ENCODE measurements at regions of chr2 and their contacts with region 1.

Region 1: DNA sequence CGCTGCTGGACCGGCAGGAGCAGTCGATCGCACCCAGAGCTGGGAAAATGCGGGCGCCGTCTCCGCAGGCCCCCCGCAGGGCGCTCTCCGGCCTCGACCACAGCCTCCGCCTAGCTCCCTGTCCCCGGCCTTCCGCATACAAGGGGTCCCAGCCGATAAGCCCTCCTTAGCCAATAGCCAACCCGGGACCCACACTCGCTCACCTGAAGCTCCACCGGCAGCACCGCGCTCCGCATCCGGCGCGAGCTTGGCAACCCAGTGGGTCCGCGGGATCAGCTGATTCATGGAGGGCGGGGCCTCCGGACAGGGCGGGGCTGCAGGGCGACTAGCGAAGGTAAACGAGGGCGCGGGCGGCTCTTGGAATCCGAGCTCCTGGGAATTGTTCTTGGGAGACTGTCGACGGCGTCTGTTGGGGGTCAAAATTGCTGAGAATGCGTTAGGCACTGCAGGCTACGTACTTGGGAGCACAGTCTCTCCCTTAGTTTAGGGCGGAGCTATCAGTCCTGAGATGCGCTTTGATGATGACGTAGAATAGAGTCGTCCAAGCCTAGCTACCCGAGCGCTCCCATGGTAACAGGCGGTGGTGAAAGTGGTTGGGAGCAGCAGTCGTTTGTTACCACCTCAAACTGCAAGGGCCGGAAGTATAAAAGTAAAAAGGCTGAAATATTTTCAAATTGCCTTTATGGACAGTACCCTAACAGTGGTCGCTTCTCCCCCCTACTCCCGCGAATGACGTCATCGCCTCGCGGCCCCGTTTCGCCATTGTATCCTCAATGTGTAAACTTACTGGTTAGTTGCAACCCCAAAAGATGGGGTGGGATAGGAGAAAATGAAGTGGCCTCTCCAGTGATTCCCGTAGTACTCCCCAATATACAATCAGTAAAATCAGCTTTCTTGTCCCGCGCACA is at the start of gene ALS2:
- DNase-seq: peak; percentile 90
- H3K4me3 Mint-ChIP-seq: peak within 1 kb of the TSS; percentile 97
- H3K27ac Mint-ChIP-seq: peak within 1 kb of the TSS; percentile 95
- H3K4me1 Mint-ChIP-seq: peaks cover 19% of the 10 kb centered on the region
- H3K27me3 Mint-ChIP-seq: peaks cover 11% of the 10 kb centered on the region
- total RNA-seq, gene ALS2: 11.3 and 14.3 TPM in 2 replicates

Region 2: GRCh38 chr2:201642579-201643215 is 138.2 kb before region 1 on chr2:
- intact Hi-C with region 1: loop called (anchors 2 kb)
- DNase-seq: peak; percentile 85
- H3K4me3 Mint-ChIP-seq: peak overlapping the region; percentile 87
- H3K27ac Mint-ChIP-seq: peak overlapping the region; percentile 91
- H3K4me1 Mint-ChIP-seq: peaks cover 15% of the 10 kb centered on the region
- H3K27me3 Mint-ChIP-seq: peaks cover 1% of the 10 kb centered on the region

Region 3: DNA sequence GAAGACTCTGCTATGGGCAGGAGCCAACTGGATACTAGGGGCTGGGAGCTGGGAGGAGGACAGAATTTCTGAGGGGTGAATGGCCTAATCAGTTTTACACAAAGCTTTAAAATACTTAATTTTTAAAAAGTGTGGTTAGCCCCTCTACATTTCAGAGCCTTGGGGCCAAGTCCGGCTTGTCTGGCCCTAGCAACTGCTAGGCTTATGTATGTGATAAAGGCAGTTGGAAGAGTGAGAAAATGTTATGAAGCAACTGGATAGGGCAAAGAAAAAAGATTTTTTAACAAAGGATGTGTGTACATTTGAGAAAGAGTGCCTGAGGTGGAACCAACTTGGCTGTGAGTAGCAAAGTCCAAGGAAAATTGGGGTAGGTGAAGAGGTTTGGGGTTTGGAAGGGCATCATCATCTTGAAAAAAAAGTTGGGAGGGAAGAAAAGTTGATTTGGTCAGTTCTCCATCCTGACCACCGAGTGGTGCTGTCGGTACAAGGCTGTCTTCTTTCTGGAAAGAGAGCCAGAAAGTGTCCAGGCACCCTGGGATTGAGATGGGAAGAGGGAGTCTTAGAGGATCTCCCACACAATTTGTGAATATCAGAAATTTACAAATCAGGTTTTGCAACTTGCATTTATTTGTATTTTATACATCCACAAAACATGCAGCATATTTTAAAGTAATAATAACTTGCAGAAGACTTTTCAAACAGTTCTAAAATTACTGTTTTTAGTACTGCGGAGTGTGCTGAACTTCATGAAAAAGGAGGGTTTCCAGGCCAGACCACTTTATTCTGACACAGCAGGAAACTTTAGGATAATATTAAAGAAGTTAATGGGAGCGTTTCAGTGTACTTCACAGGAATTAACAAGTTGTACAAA is 14.9 kb after region 1 on chr2:
- intact Hi-C with region 1: no loop called
- DNase-seq: no peak
- H3K4me3 Mint-ChIP-seq: no peak overlapping the region
- H3K27ac Mint-ChIP-seq: no peak overlapping the region
- H3K4me1 Mint-ChIP-seq: no peaks in the 10 kb centered on the region
- H3K27me3 Mint-ChIP-seq: peaks cover 10% of the 10 kb centered on the region